ENCODE measurements at regions of chr10 and their contacts with region 1.

Region 1: DNA sequence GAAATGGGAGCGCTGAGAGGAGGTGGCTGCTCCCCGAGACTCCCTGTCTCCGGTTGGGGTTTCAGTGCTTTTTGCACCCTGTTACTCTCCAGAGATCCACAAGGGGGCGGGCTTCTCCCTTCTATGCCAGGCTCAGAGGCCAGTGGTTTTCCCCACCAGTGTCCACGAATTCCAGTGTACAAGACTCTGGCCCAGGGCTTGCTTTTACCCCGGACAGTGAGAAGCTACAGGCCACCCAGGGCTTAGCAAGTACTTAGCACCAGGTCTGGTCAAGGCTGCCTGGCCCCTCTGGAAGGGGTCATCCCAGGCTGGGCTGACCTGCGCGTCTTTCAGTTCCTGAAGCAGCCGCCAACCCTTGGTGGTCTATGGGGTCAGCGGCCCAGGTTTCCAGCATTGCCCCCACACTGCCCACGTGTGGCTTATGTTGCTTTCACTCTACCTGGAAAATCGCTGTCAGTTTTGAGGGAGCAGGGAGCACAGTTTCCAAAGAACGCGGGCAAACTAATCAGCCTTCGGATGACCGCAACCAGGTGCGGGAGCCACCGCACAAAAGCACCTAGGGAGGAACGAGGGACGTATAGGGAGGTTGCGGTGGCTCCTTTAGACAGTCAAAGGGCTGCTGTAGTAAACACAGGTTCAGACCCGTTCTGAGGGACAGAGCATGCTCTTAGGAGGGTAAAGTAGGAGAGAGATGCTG is 6.8 kb downstream of the CYP26A1 start:
- DNase-seq: peak; percentile 44 to 76 (median 63)
- H3K4me3 ChIP-seq: no peak overlapping the region
- H3K27ac ChIP-seq: no peak overlapping the region
- H3K4me1 ChIP-seq: peaks cover 0 to 6% of the 10 kb centered on the region in 2 donors
- H3K27me3 ChIP-seq: no peaks in the 10 kb centered on the region
- CTCF ChIP-seq: peak; percentile 63 to 85 (median 74)
- POLR2A ChIP-seq: no peak

Region 2: DNA sequence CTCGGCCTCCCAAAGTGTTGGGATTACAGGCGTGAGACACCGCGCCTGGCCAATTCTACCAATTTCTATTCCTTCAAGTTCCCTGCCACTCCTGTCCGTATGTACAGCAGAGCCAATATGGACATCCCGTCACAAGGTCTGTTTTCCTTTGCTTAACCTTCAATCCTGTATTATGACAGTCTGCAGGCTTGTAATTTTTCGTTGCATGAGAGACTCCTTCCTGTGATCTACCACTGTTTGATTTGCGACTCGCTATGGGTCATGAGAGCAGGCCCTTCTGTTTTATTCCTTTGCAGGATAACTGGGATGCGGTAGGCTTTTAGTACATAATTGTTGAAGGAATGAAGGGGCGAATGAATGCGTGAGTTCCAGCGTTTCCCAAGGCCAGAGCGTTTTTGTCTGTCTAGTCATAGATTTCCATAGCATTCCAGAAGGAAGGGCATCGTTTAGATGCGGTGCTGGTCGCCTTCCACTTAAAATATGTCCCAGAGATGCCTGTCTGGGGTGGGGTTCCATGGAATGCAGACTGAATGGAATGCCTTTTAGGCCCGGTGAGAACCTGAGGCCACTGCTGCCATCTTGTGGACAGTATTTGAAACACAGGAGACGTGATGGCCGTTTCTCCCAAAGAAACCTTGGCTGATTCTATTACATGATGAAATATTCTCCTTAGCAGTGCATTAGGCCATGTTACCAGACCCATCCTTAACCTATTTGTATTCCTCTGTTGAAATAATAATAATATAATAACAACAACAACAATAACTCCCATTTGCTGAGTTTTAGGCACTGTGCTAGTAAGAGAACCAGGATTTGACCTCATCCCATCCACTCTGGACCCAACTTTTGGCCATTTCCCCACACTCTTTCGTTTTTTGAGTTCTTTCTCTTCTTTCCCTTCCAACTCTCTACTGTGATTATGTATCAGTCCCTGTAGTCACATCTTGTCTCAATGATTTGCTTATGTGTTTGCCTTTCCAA is 208.4 kb after region 1 on chr10:
- intact Hi-C with region 1: loop called (anchors 10 kb)
- DNase-seq: peak; percentile 66 to 90 (median 72)
- H3K4me3 ChIP-seq: no peak overlapping the region
- H3K27ac ChIP-seq: peak overlapping the region in 1 of 5 donors; percentile 40
- H3K4me1 ChIP-seq: no peaks in the 10 kb centered on the region
- H3K27me3 ChIP-seq: no peaks in the 10 kb centered on the region
- CTCF ChIP-seq: peak; percentile 75 to 88 (median 84)
- POLR2A ChIP-seq: no peak

Region 3: GRCh38 chr10:93352638-93353383 is 272.3 kb after region 1 on chr10:
- intact Hi-C with region 1: loop called in 1 of 2 experiments (anchors 10 kb)
- DNase-seq: no peak
- H3K4me3 ChIP-seq: no peak overlapping the region
- H3K27ac ChIP-seq: no peak overlapping the region
- H3K4me1 ChIP-seq: no peaks in the 10 kb centered on the region
- H3K27me3 ChIP-seq: no peaks in the 10 kb centered on the region
- CTCF ChIP-seq: peak; percentile 58 to 77 (median 70)
- POLR2A ChIP-seq: no peak

Region 4: DNA sequence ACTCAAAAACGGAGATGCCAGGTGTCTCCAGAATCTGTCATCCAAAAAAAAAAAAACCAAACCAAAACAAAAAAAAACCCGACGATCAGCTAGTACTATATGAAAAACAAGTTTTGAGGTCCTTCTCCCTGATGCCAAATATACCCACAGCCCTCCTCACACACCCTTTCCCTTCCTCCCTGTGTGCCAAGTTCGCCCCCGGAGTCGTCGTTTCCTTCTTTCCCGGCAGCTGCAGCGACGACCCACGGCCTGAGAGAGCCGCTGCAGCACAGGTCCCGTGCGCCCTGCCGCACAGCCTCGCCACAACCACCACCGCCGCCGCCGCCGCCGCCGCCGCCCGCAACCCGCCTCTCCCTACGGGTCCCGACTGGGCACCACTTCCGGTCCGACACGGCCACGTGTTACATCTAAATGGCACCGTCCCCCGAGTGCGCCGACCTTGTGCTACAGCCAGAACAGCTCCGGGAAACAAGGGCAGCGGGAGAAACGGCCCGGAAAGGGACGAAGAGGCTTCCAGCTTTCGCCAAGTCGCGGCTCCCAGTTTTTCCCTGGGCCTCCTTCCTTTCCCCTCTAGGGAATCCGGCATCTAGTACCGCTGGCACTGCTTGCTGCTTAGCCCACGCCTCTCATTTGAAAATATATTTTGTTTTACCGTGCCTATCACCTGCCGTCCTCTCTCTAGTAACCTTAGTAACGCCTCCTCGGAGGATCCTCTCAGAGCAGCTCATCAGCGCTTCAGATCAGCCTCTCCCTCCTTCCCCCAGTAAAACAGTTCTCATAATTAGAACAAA is 621.9 kb after region 1 on chr10 and contains the start of gene FRA10AC1:
- intact Hi-C with region 1: no loop called
- DNase-seq: peak; percentile 92 to 99 (median 95)
- H3K4me3 ChIP-seq: peak within 1 kb of the TSS; percentile 39 to 99 (median 82)
- H3K27ac ChIP-seq: peak within 1 kb of the TSS; percentile 72 to 89 (median 79)
- H3K4me1 ChIP-seq: peaks cover 5 to 20% of the 10 kb centered on the region in 2 donors
- H3K27me3 ChIP-seq: no peaks in the 10 kb centered on the region
- CTCF ChIP-seq: peak in 5 of 6 experiments; percentile 39 to 75 (median 50)
- POLR2A ChIP-seq: peak; percentile 61 to 73
- total RNA-seq, gene FRA10AC1: 3.3 to 73.4 (median 12.6) TPM